ENCODE measurements at regions of chr6 and their contacts with region 1.

Region 1: DNA sequence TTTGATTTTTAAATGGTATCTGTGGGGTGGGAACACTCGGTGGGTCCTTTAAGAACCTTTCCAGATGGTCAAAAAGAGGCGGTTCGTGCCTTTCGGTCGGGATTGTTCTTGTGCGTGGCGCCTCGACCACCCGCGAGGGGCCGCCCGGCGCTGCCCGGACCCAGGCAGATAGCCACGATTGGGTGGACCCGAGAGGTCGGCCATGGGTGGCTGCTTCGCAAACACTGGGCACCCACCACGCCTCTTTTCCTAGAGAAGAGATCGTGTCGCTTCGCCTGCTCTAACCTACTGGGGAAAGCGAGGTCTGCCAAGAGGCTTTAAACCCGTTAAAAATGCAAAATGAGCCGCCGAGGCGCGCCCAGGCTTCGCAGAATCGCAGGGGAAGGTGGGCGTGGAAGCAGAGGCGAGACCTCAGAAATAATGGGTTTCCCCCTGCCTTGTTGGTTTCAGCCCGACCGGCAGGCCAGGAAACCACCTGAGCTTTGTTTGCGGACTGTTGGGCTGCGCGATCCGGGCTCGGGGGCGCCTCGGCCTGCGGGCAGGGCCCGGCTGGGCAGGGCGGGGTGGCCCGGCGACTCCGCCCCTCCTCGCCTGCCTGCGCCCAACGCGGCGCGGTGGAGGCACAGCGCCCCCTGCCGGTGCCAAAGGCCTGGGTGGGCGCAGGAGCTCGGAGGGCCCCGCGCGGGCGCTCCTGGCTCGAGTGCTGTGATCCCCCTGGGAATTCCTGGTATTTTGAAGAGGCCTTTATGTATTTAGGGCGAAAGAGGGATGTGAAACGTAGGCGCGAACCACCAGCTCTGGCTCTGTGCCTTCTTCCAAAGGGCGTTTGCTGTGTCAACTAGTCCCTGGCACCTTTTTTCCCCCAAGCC is 1.6 kb downstream of the MARCKS start:
- DNase-seq: peak; percentile 80 to 98 (median 87)
- H3K4me3 ChIP-seq: peak overlapping the region; percentile 74 to 98 (median 94)
- H3K4me3 Mint-ChIP-seq: peak overlapping the region in 1 of 2 donors; percentile 92
- H3K27ac ChIP-seq: peak overlapping the region; percentile 98
- H3K27ac Mint-ChIP-seq: peak overlapping the region in 5 of 7 donors; percentile 50 to 82 (median 73)
- H3K4me1 ChIP-seq: peaks cover 25 to 34% of the 10 kb centered on the region in 2 donors
- H3K4me1 Mint-ChIP-seq: peaks cover 11% of the 10 kb centered on the region
- H3K27me3 ChIP-seq: no peaks in the 10 kb centered on the region
- H3K27me3 Mint-ChIP-seq: peaks cover 0 to 23% (median 3%) of the 10 kb centered on the region in 3 donors
- CTCF ChIP-seq: peak; percentile 97

Region 2: DNA sequence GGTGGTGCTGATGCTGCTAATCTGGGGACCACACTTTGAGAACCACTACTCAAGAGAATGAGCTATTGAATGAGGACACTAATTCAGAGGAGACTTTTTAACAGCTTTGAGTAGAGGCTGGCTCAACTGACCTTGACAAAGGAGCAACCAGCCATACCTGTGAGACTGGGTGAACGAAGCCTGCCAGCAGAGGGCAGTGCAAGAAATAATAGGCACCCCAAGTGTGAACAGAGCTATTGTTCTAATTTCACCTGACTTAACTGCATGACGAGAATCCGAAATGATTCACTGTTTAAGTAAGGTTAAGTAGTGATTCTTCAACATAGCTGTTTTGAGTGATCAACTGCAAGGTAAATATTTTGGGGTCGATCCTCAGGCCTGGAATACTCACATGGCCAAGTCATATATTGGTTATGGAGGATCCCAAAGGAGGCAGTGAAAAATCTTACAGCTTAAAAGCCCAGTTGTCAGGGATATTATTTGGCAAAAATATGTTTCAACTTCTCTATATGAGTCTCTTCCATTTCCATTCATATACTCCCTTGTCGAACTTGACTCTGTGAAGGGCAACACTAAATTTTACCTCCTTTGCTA is 552.1 kb before region 1 on chr6:
- intact Hi-C with region 1: loop called in 1 of 2 experiments (anchors 5 kb)
- DNase-seq: peak; percentile 42 to 63 (median 44)
- H3K4me3 ChIP-seq: no peak overlapping the region
- H3K4me3 Mint-ChIP-seq: no peak overlapping the region
- H3K27ac ChIP-seq: no peak overlapping the region
- H3K27ac Mint-ChIP-seq: no peak overlapping the region
- H3K4me1 ChIP-seq: no peaks in the 10 kb centered on the region
- H3K4me1 Mint-ChIP-seq: no peaks in the 10 kb centered on the region
- H3K27me3 ChIP-seq: no peaks in the 10 kb centered on the region
- H3K27me3 Mint-ChIP-seq: peaks cover 0 to 6% (median 0%) of the 10 kb centered on the region in 3 donors
- CTCF ChIP-seq: peak; percentile 68

Region 3: DNA sequence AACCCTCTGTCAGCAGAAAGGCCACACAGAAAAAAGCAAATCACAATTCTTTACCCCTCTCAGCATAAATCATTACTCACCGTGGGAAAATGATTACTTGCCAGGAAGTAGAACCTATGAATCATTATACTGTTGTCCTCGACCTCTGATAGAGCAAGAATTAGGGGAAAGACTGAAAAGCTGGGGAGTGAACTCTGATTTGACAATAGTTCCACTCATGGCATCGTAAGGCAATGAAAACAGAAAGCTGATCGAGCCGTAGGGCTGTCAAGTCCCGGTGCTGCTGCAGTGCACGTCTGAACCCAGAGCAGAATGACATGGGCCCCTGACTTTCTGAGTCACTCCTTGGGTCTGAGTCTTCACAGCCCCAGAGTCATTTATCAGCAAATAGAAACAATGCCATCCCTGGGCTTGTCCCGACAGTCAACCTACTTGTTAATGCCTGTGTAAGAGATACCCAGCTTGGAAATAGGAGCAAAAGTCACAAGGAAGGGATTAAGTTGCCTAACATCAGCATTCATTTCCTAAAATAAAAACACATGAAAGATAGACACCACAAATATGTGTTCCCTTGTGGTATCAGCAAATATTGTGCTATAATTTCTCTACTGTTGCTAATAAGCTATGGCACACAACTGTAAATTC is 226.4 kb before region 1 on chr6:
- intact Hi-C with region 1: loop called (anchors 2 to 5 kb)
- DNase-seq: peak; percentile 92 to 96 (median 94)
- H3K4me3 ChIP-seq: peak overlapping the region in 1 of 3 experiments; percentile 46
- H3K4me3 Mint-ChIP-seq: peak overlapping the region; percentile 60 to 78
- H3K27ac ChIP-seq: peak overlapping the region; percentile 93 to 100
- H3K27ac Mint-ChIP-seq: peak overlapping the region; percentile 100
- H3K4me1 ChIP-seq: peaks cover 63 to 72% of the 10 kb centered on the region in 2 donors
- H3K4me1 Mint-ChIP-seq: peaks cover 58% of the 10 kb centered on the region
- H3K27me3 ChIP-seq: no peaks in the 10 kb centered on the region
- H3K27me3 Mint-ChIP-seq: peaks cover 0 to 6% (median 0%) of the 10 kb centered on the region in 3 donors
- CTCF ChIP-seq: no peak

Region 4: DNA sequence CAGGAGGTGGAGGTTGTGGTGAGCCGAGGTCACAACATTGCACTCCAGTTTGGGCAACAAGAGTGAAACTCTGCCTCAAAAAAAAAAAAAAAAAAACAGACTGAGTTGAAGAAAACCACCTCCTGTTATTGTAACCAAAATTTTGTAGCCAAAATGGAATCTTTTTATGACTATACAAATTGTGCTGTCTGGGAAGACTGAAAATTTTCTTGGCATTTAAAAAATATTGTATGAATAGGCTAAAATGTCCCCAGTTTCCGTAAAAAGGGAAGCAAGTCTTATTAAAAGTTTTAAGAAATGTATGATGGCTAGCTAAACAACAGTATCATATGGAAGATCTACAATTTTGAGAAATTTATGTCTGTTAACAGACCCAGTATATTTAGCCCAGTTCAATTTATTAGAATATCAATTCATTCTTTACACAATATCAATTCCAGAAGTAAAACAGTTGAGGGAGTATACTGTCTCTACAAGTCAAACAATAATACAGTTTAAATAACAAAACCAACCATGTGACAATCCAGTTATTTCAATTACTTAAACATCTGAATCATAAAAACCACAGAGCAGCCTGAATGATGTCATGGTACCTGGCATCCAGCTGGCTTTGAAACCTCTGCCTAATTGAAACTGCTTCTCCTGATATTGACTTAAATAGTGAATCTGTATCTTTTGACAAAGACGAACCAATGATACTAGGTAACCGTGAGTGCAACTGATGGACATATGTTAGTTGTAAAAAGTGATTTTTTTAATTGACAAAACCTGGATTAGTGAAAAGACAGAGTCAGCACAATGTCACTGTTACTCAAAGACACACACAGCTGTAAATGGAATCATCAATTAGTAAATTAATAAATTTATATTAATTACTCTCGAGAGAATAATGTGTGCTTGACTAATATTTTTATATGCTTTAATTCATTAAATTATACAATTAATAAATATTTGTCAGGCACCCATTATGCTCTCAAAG is 168.1 kb before region 1 on chr6:
- intact Hi-C with region 1: loop called (anchors 2 to 10 kb)
- DNase-seq: peak; percentile 29 to 66 (median 55)
- H3K4me3 ChIP-seq: no peak overlapping the region
- H3K4me3 Mint-ChIP-seq: no peak overlapping the region
- H3K27ac ChIP-seq: peak overlapping the region in 1 of 2 donors; percentile 28
- H3K27ac Mint-ChIP-seq: peak overlapping the region in 1 of 7 donors; percentile 72
- H3K4me1 ChIP-seq: peaks cover 5 to 10% of the 10 kb centered on the region in 2 donors
- H3K4me1 Mint-ChIP-seq: peaks cover 15% of the 10 kb centered on the region
- H3K27me3 ChIP-seq: no peaks in the 10 kb centered on the region
- H3K27me3 Mint-ChIP-seq: peaks cover 0 to 3% (median 1%) of the 10 kb centered on the region in 3 donors
- CTCF ChIP-seq: no peak

Region 5: DNA sequence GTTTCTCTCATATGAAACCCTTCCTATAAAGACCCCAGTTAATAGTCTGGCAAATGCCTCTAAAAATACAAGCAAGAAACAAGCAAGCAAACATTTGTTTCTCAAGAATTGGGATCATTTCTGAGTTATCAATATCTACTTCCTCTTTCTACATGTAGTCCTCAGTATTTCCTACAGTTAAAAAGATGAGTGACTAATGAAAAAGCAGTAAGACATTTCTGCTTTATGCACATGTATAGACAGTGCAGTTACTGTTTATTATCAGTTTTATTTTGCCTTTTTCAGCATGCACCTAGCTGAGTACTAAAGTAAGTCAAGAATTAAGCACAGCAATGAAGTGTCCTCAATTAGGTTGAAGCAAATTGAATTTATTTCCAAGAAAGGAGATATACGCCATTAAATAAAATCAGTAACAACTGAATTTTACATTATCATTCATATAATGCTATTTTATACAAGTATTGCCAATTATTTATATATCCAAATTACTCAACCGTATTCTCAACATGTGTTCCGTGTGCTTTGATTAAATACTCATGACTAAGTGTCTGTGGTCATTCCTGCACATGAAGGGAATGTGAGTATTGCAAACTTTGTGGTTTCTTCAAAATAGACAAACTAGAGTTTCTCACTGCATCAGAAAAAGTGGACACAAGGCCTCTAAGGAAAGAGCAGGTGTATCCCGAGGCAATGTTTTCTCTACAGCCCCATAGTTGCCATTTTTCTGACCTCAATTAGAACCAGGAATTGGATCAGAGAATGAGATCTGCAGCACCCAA is 160.9 kb before region 1 on chr6:
- intact Hi-C with region 1: loop called (anchors 2 to 10 kb)
- DNase-seq: peak; percentile 54 to 81 (median 77)
- H3K4me3 ChIP-seq: peak overlapping the region in 1 of 3 experiments; percentile 14
- H3K4me3 Mint-ChIP-seq: no peak overlapping the region
- H3K27ac ChIP-seq: peak overlapping the region in 1 of 2 donors; percentile 85
- H3K27ac Mint-ChIP-seq: peak overlapping the region; percentile 89 to 98 (median 92)
- H3K4me1 ChIP-seq: peaks cover 32 to 38% of the 10 kb centered on the region in 2 donors
- H3K4me1 Mint-ChIP-seq: peaks cover 34% of the 10 kb centered on the region
- H3K27me3 ChIP-seq: no peaks in the 10 kb centered on the region
- H3K27me3 Mint-ChIP-seq: no peaks in the 10 kb centered on the region
- CTCF ChIP-seq: no peak

Region 6: DNA sequence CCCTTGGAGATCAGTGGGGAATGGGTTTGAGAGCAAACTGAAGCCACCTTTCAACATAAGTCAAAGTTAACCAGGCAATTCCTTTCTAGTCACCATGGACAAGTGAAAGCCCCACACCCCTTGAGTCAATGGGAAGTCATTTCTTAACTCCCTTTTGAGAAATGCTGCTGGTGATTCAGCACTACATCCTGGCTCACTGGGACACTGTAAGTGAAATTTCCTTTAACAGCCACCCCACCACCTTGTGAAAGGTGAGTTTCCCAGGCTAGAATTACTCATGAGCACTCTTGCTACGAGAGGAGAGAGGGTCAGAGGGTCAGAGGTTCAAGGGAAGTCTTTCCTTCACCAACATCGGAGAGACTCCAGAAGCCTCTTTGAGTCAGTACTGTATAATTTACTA is 94.8 kb before region 1 on chr6:
- intact Hi-C with region 1: loop called in 1 of 2 experiments (anchors 10 kb)
- DNase-seq: peak; percentile 82 to 98 (median 95)
- H3K4me3 ChIP-seq: peak overlapping the region in 1 of 3 experiments; percentile 36
- H3K4me3 Mint-ChIP-seq: peak overlapping the region in 1 of 2 donors; percentile 73
- H3K27ac ChIP-seq: peak overlapping the region; percentile 55 to 93
- H3K27ac Mint-ChIP-seq: peak overlapping the region; percentile 92 to 98 (median 97)
- H3K4me1 ChIP-seq: peaks cover 29 to 32% of the 10 kb centered on the region in 2 donors
- H3K4me1 Mint-ChIP-seq: peaks cover 26% of the 10 kb centered on the region
- H3K27me3 ChIP-seq: no peaks in the 10 kb centered on the region
- H3K27me3 Mint-ChIP-seq: no peaks in the 10 kb centered on the region
- CTCF ChIP-seq: no peak

Region 7: GRCh38 chr6:113805173-113805790 is 53.4 kb before region 1 on chr6:
- intact Hi-C with region 1: loop called in 1 of 2 experiments (anchors 5 kb)
- DNase-seq: peak; percentile 38 to 65 (median 58)
- H3K4me3 ChIP-seq: peak overlapping the region; percentile 8 to 61 (median 32)
- H3K4me3 Mint-ChIP-seq: peak overlapping the region; percentile 47 to 71
- H3K27ac ChIP-seq: peak overlapping the region; percentile 72 to 91
- H3K27ac Mint-ChIP-seq: peak overlapping the region; percentile 89 to 97 (median 93)
- H3K4me1 ChIP-seq: peaks cover 62 to 78% of the 10 kb centered on the region in 2 donors
- H3K4me1 Mint-ChIP-seq: peaks cover 66% of the 10 kb centered on the region
- H3K27me3 ChIP-seq: no peaks in the 10 kb centered on the region
- H3K27me3 Mint-ChIP-seq: peaks cover 0 to 2% (median 0%) of the 10 kb centered on the region in 3 donors
- CTCF ChIP-seq: no peak

Region 8: DNA sequence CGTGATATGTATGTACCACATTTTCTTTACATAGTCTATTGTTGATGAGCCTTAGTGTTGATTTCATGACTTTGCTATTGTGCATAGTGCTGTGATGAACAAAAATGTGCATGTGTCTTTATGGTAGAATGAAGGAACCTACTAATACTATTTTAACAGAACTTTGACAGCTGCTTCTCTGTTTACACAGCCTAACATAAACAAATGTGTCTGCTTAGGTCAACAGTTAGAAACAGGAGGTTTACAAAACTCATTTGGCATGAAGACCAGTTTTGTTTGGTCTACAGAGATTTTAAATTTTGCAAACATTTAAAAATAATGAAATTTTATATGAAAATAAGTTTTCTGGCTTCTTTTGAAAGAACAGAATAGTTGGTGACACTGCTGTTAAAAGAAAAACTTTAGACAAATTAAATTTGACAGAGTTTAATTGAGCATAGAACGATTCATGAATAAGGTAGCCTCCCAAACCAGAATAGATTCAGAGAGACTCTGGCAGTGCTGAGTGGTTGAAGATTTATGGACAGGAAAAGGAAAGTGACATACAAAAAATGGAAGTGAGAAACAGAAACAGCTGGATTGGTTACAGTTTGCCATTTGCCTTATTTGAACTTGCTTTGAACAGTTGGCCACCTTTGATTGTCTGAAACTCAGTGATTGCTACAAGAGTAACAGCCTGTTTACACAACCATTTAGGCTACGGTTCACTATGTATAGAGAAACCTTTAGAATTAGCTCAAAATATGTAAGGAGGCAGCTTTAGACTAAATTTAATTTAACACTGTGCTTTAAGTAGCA is 1199.9 kb after region 1 on chr6:
- intact Hi-C with region 1: no loop called
- DNase-seq: no peak
- H3K4me3 ChIP-seq: no peak overlapping the region
- H3K4me3 Mint-ChIP-seq: no peak overlapping the region
- H3K27ac ChIP-seq: no peak overlapping the region
- H3K27ac Mint-ChIP-seq: no peak overlapping the region
- H3K4me1 ChIP-seq: no peaks in the 10 kb centered on the region
- H3K4me1 Mint-ChIP-seq: no peaks in the 10 kb centered on the region
- H3K27me3 ChIP-seq: no peaks in the 10 kb centered on the region
- H3K27me3 Mint-ChIP-seq: no peaks in the 10 kb centered on the region
- CTCF ChIP-seq: no peak